ENCODE measurements at regions of chr12 and their contacts with region 1.

Region 1: DNA sequence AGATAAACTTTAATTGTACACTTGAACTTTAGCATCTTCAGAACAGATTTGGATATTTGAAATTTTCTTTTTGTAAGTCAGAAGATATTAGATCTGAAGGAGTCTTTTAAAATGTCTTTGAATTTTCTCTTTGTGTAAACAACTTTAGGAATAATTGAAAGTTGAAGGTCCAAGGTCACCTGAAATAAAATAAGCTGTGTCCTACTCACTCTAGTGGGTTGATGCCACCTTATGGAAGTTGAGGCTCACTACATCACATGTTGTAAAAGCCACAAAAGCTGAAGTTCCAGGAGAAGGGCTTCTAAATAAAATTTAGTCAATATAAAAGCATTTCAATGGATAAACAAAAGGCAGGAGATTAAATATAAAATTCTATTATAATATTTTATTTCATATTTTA is 122.0 kb upstream of the ATXN7L3B start:
- DNase-seq: peak; percentile 36 to 62
- ATAC-seq: peak in 1 of 2 experiments; percentile 81; a peak in 3 of 6 replicates
- H3K4me3 ChIP-seq: no peak overlapping the region
- H3K27ac ChIP-seq: no peak overlapping the region
- H3K4me1 ChIP-seq: peaks cover 4% of the 10 kb centered on the region; the same call in 1 of the 3 replicates
- CTCF ChIP-seq: peak; percentile 78
- EP300 ChIP-seq: no peak
- POLR2A ChIP-seq: no peak
- RAD21 ChIP-seq: peak; percentile 81 to 85

Region 2: DNA sequence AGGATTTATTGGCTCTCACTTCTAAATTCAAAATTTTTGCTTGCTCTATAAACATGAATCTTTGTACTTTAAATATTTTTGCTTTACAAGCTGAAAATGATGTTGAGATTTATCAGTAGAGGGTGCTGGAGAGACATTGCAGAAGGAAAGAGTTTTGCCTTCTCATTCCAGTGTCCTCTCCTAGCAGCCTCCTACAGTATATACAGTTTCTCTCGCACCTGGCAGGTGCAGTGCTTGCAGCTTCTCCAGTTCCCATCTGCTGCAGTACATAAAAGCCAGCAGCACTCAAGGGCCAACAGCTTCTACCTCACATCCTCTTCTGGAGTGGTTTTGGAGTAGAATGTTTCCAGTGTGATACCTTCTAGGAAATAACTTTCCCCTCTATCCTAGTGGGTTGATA is 479.8 kb before region 1 on chr12:
- CTCF ChIA-PET with region 1: interaction called, 18 read pairs
- POLR2A ChIA-PET with region 1: no interaction called
- DNase-seq: peak in 1 of 2 experiments; percentile 55
- ATAC-seq: peak; percentile 83 to 86
- H3K4me3 ChIP-seq: no peak overlapping the region
- H3K27ac ChIP-seq: no peak overlapping the region
- H3K4me1 ChIP-seq: no peaks in the 10 kb centered on the region
- CTCF ChIP-seq: peak; percentile 80
- EP300 ChIP-seq: no peak
- POLR2A ChIP-seq: no peak
- RAD21 ChIP-seq: peak; percentile 74 to 79

Region 3: GRCh38 chr12:74021937-74022336 is 393.7 kb before region 1 on chr12:
- CTCF ChIA-PET with region 1: interaction called, 16 read pairs
- POLR2A ChIA-PET with region 1: interaction called, 5 read pairs
- DNase-seq: peak; percentile 22 to 92
- ATAC-seq: peak; percentile 100
- H3K4me3 ChIP-seq: no peak overlapping the region
- H3K27ac ChIP-seq: peak overlapping the region; percentile 42 to 79
- H3K4me1 ChIP-seq: peaks cover 14% of the 10 kb centered on the region; the same call in 2 of the 3 replicates
- CTCF ChIP-seq: peak; percentile 80
- EP300 ChIP-seq: no peak
- POLR2A ChIP-seq: no peak
- RAD21 ChIP-seq: peak; percentile 89 to 94

Region 4: GRCh38 chr12:74401966-74402365 is 13.7 kb before region 1 on chr12:
- CTCF ChIA-PET with region 1: interaction called, 15 read pairs
- POLR2A ChIA-PET with region 1: no interaction called
- DNase-seq: peak; percentile 28 to 79
- ATAC-seq: peak; percentile 81 to 95
- H3K4me3 ChIP-seq: peak overlapping the region; percentile 43; the same call in 2 of the 3 replicates
- H3K27ac ChIP-seq: peak overlapping the region; percentile 80 to 97
- H3K4me1 ChIP-seq: peaks cover 27% of the 10 kb centered on the region
- CTCF ChIP-seq: no peak
- EP300 ChIP-seq: no peak
- POLR2A ChIP-seq: no peak
- RAD21 ChIP-seq: no peak

Region 5: GRCh38 chr12:74431801-74432200 is 16.2 kb after region 1 on chr12:
- CTCF ChIA-PET with region 1: no interaction called
- POLR2A ChIA-PET with region 1: no interaction called
- DNase-seq: no peak
- ATAC-seq: no peak
- H3K4me3 ChIP-seq: no peak overlapping the region
- H3K27ac ChIP-seq: no peak overlapping the region
- H3K4me1 ChIP-seq: no peaks in the 10 kb centered on the region
- CTCF ChIP-seq: no peak
- EP300 ChIP-seq: no peak
- POLR2A ChIP-seq: no peak
- RAD21 ChIP-seq: no peak

Region 6: DNA sequence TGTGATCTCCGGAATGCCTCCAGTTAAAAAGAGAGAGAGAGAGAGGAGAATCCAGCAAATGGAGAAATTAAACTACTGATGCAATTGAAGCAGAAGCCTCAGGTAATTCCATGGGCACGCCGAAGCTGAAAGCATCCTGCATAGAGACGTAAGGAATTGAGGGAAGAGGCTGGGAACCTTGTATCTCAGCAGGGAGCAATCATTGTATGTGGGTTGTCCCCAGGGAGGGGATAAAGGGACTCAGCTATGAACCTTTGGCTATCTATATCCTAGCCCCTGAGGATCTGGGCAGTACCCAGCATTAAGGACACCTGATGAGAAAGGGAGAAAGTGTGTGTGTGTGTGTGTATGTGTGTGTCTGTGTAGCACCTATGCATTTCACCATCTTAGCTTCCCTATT is 26.2 kb after region 1 on chr12:
- CTCF ChIA-PET with region 1: no interaction called
- POLR2A ChIA-PET with region 1: no interaction called
- DNase-seq: no peak
- ATAC-seq: no peak
- H3K4me3 ChIP-seq: no peak overlapping the region
- H3K27ac ChIP-seq: no peak overlapping the region
- H3K4me1 ChIP-seq: no peaks in the 10 kb centered on the region
- CTCF ChIP-seq: no peak
- EP300 ChIP-seq: no peak
- POLR2A ChIP-seq: no peak
- RAD21 ChIP-seq: no peak

Measured in A549 (cell line).